Heart left ventricle (tissue), 16 donors: ENCODE measurements at regions of chr1 and their contacts with region 1.

Region 1: GRCh38 chr1:27662707-27663393 is 9.1 kb downstream of the IFI6 start:
- DNase-seq: peak; percentile 73 to 85 (median 82)
- ATAC-seq: peak; percentile 52 to 78 (median 68)
- H3K4me3 ChIP-seq: peak overlapping the region in 1 of 12 donors; percentile 27
- H3K27ac ChIP-seq: peak overlapping the region; percentile 27 to 90 (median 72)
- H3K4me1 ChIP-seq: peaks cover 4 to 63% (median 34%) of the 10 kb centered on the region in 12 donors
- H3K27me3 ChIP-seq: no peaks in the 10 kb centered on the region
- CTCF ChIP-seq: peak; percentile 84 to 95 (median 90)
- POLR2A ChIP-seq: no peak

Region 2: GRCh38 chr1:27300341-27301051 is 362.4 kb before region 1 on chr1:
- intact Hi-C with region 1: loop called in 8 of 10 experiments (anchors 2 to 10 kb)
- DNase-seq: peak; percentile 75 to 92 (median 83)
- ATAC-seq: peak; percentile 77 to 87 (median 85)
- H3K4me3 ChIP-seq: no peak overlapping the region
- H3K27ac ChIP-seq: peak overlapping the region; percentile 48 to 94 (median 79)
- H3K4me1 ChIP-seq: peaks cover 3 to 44% (median 31%) of the 10 kb centered on the region in 12 donors
- H3K27me3 ChIP-seq: no peaks in the 10 kb centered on the region
- CTCF ChIP-seq: peak; percentile 92 to 100 (median 98)
- POLR2A ChIP-seq: no peak

Region 3: DNA sequence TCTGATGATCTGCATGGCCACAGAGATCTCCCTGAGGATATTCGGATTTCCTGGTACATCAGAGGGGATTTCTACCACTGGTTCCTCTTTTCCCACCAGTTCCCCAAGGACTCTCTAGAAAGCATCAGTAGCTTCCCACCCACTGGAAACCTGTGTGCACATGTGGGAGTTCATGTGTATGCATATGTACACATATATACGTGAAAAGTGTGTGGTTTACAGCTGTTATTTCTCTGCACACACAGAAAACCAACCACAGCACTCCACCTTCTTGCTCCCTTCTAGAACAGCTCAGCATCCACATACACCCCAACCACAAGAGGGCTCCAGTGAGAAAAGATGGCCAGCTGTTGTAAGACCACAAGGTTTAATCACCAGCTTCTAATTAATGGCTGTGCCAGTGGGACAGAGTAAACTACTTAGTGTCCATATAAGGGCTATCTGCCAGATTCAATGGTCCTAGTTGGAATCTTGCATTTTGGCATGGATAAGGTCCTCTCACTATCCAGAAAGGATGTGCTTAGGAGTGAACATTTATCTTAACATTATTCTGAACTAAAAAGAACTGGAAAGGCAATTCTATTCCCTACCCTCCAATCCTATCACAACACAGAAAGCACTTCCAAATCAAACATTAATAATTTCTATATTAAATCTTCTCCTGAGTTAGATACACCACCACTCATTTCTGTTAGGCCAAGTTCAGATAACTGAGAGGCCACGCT is 246.3 kb before region 1 on chr1:
- intact Hi-C with region 1: loop called in 1 of 10 experiments (anchors 5 kb)
- DNase-seq: peak in 1 of 5 donors; percentile 47
- ATAC-seq: peak in 3 of 4 donors; percentile 35 to 50 (median 40)
- H3K4me3 ChIP-seq: no peak overlapping the region
- H3K27ac ChIP-seq: peak overlapping the region in 7 of 12 donors; percentile 20 to 86 (median 75)
- H3K4me1 ChIP-seq: peaks cover 3 to 67% (median 56%) of the 10 kb centered on the region in 12 donors
- H3K27me3 ChIP-seq: no peaks in the 10 kb centered on the region
- CTCF ChIP-seq: peak; percentile 51 to 73 (median 66)
- POLR2A ChIP-seq: no peak

Region 4: GRCh38 chr1:27455139-27455811 is 207.6 kb before region 1 on chr1:
- intact Hi-C with region 1: no loop called
- DNase-seq: no peak
- ATAC-seq: peak in 1 of 4 donors; percentile 37
- H3K4me3 ChIP-seq: no peak overlapping the region
- H3K27ac ChIP-seq: peak overlapping the region in 3 of 12 donors; percentile 0 to 24 (median 19)
- H3K4me1 ChIP-seq: peaks cover 4 to 63% (median 42%) of the 10 kb centered on the region in 12 donors
- H3K27me3 ChIP-seq: no peaks in the 10 kb centered on the region
- CTCF ChIP-seq: no peak
- POLR2A ChIP-seq: no peak

Region 5: GRCh38 chr1:27556781-27557595 is 105.9 kb before region 1 on chr1:
- intact Hi-C with region 1: loop called in 4 of 10 experiments (anchors 1 to 5 kb)
- DNase-seq: peak; percentile 93 to 96 (median 96)
- ATAC-seq: peak; percentile 21 to 76 (median 72)
- H3K4me3 ChIP-seq: peak overlapping the region in 9 of 12 donors; percentile 15 to 40 (median 32)
- H3K27ac ChIP-seq: peak overlapping the region; percentile 77 to 96 (median 90)
- H3K4me1 ChIP-seq: peaks cover 4 to 77% (median 66%) of the 10 kb centered on the region in 12 donors
- H3K27me3 ChIP-seq: no peaks in the 10 kb centered on the region
- CTCF ChIP-seq: peak; percentile 88 to 98 (median 95)
- POLR2A ChIP-seq: no peak

Region 6: GRCh38 chr1:27643701-27644625 is 18.9 kb before region 1 on chr1:
- intact Hi-C with region 1: loop called in 3 of 10 experiments (anchors 1 to 2 kb)
- DNase-seq: peak in 3 of 5 donors; percentile 64 to 73 (median 71)
- ATAC-seq: peak in 3 of 4 donors; percentile 65 to 77 (median 73)
- H3K4me3 ChIP-seq: no peak overlapping the region
- H3K27ac ChIP-seq: no peak overlapping the region
- H3K4me1 ChIP-seq: peaks cover 0 to 36% (median 13%) of the 10 kb centered on the region in 12 donors
- H3K27me3 ChIP-seq: no peaks in the 10 kb centered on the region
- CTCF ChIP-seq: peak; percentile 71 to 85 (median 77)
- POLR2A ChIP-seq: no peak